Naive thymus-derived CD4-positive, alpha-beta T cell (primary cell): ENCODE measurements at regions of chr21 and their contacts with region 1.

Region 1: GRCh38 chr21:29343519-29343918 is 44.8 kb downstream of the BACH1 start:
- DNase-seq: no peak
- ATAC-seq: no peak
- H3K4me3 ChIP-seq: no peak overlapping the region
- H3K4me3 Mint-ChIP-seq: no peak overlapping the region
- H3K27ac ChIP-seq: no peak overlapping the region
- H3K27ac Mint-ChIP-seq: no peak overlapping the region
- H3K4me1 ChIP-seq: peaks cover 0 to 6% of the 10 kb centered on the region in 2 donors
- H3K4me1 Mint-ChIP-seq: peaks cover 4 to 31% (median 15%) of the 10 kb centered on the region in 7 donors
- H3K27me3 ChIP-seq: no peaks in the 10 kb centered on the region
- H3K27me3 Mint-ChIP-seq: no peaks in the 10 kb centered on the region

Region 2: GRCh38 chr21:29091032-29091431 is 252.5 kb before region 1 on chr21:
- CTCF ChIA-PET with region 1: interaction called, 19 read pairs
- POLR2A ChIA-PET with region 1: interaction called, 4 read pairs
- intact Hi-C with region 1: loop called (anchors 1 kb)
- DNase-seq: no peak
- ATAC-seq: peak; percentile 9
- H3K4me3 ChIP-seq: no peak overlapping the region
- H3K4me3 Mint-ChIP-seq: no peak overlapping the region
- H3K27ac ChIP-seq: no peak overlapping the region
- H3K27ac Mint-ChIP-seq: no peak overlapping the region
- H3K4me1 ChIP-seq: no peaks in the 10 kb centered on the region
- H3K4me1 Mint-ChIP-seq: peaks cover 0 to 9% (median 0%) of the 10 kb centered on the region in 7 donors
- H3K27me3 ChIP-seq: no peaks in the 10 kb centered on the region
- H3K27me3 Mint-ChIP-seq: peaks cover 0 to 3% (median 0%) of the 10 kb centered on the region in 5 donors

Region 3: DNA sequence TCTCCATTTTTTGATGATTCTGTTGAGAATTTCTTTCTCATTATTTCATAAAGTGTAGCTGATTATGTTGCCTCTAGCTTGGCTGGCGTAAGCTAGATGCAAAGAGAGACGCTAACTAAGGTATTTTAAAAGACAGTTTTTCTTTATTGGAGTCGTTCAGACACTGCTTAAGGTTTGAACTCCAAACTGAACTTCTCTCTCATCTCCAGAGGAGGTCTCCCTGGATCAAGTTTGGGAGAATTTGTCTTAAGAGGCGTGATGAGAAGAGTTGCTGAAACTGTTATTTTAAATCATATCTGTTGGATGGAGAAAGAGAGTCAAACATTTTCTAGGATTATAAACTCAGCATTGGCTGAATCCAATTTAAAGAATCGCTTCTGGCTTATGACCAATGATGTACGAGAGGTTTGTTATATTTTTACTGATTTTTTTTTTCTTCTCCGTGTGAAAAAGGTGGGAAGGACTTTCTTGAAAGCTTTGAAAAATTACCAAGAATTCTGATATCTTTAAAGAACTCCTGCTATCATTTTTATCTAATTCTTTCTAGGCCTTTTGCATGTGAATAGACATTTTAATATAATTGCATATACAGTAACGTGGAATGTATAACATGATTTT is 179.1 kb before region 1 on chr21:
- CTCF ChIA-PET with region 1: no interaction called
- POLR2A ChIA-PET with region 1: interaction called, 3 read pairs
- intact Hi-C with region 1: loop called (anchors 1 kb)
- DNase-seq: peak in 1 of 9 donors; percentile 6
- ATAC-seq: no peak
- H3K4me3 ChIP-seq: no peak overlapping the region
- H3K4me3 Mint-ChIP-seq: no peak overlapping the region
- H3K27ac ChIP-seq: no peak overlapping the region
- H3K27ac Mint-ChIP-seq: no peak overlapping the region
- H3K4me1 ChIP-seq: no peaks in the 10 kb centered on the region
- H3K4me1 Mint-ChIP-seq: peaks cover 0 to 15% (median 0%) of the 10 kb centered on the region in 7 donors
- H3K27me3 ChIP-seq: no peaks in the 10 kb centered on the region
- H3K27me3 Mint-ChIP-seq: peaks cover 0 to 3% (median 0%) of the 10 kb centered on the region in 5 donors

Region 4: DNA sequence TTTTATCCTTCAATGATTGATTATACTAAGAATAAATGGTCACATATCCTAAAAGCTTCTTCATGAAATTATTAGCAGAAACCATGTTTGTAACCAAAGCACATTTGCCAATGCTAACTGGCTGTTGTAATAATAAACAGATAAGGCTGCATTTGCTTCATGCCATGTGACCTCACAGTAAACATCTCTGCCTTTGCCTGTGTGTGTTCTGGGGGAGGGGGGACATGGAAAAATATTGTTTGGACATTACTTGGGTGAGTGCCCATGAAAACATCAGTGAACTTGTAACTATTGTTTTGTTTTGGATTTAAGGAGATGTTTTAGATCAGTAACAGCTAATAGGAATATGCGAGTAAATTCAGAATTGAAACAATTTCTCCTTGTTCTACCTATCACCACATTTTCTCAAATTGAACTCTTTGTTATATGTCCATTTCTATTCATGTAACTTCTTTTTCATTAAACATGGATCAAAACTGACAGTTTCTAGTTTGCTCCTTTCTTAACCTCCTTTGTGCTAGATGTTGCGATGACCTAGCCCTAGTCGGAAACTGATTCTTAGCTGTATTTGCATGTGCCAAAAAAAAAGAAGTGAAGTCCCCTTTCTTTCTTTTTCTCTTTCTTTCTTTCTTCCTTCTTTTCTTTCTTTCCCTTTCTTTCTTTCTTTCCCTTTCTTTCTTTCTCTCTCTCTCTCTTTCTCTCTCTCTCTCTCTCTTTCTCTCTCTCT is 167.9 kb before region 1 on chr21:
- CTCF ChIA-PET with region 1: no interaction called
- POLR2A ChIA-PET with region 1: no interaction called
- intact Hi-C with region 1: no loop called
- DNase-seq: no peak
- ATAC-seq: no peak
- H3K4me3 ChIP-seq: no peak overlapping the region
- H3K4me3 Mint-ChIP-seq: no peak overlapping the region
- H3K27ac ChIP-seq: no peak overlapping the region
- H3K27ac Mint-ChIP-seq: peak overlapping the region in 1 of 9 donors; percentile 12
- H3K4me1 ChIP-seq: no peaks in the 10 kb centered on the region
- H3K4me1 Mint-ChIP-seq: peaks cover 0 to 20% (median 5%) of the 10 kb centered on the region in 7 donors
- H3K27me3 ChIP-seq: no peaks in the 10 kb centered on the region
- H3K27me3 Mint-ChIP-seq: no peaks in the 10 kb centered on the region

Region 5: GRCh38 chr21:29217818-29218291 is 125.7 kb before region 1 on chr21:
- CTCF ChIA-PET with region 1: no interaction called
- POLR2A ChIA-PET with region 1: no interaction called
- intact Hi-C with region 1: no loop called
- DNase-seq: no peak
- ATAC-seq: peak; percentile 81
- H3K4me3 ChIP-seq: no peak overlapping the region
- H3K4me3 Mint-ChIP-seq: no peak overlapping the region
- H3K27ac ChIP-seq: no peak overlapping the region
- H3K27ac Mint-ChIP-seq: no peak overlapping the region
- H3K4me1 ChIP-seq: no peaks in the 10 kb centered on the region
- H3K4me1 Mint-ChIP-seq: peaks cover 0 to 5% (median 0%) of the 10 kb centered on the region in 7 donors
- H3K27me3 ChIP-seq: no peaks in the 10 kb centered on the region
- H3K27me3 Mint-ChIP-seq: peaks cover 0 to 4% (median 0%) of the 10 kb centered on the region in 5 donors

Region 6: GRCh38 chr21:29232601-29233546 is 110.6 kb before region 1 on chr21:
- CTCF ChIA-PET with region 1: interaction called, 5 read pairs
- POLR2A ChIA-PET with region 1: no interaction called
- intact Hi-C with region 1: loop called in 1 of 2 experiments (anchors 1 kb)
- DNase-seq: peak in 2 of 9 donors; percentile 3 to 8
- ATAC-seq: peak; percentile 24
- H3K4me3 ChIP-seq: no peak overlapping the region
- H3K4me3 Mint-ChIP-seq: peak overlapping the region in 1 of 10 donors; percentile 40
- H3K27ac ChIP-seq: no peak overlapping the region
- H3K27ac Mint-ChIP-seq: peak overlapping the region in 1 of 9 donors; percentile 45
- H3K4me1 ChIP-seq: no peaks in the 10 kb centered on the region
- H3K4me1 Mint-ChIP-seq: peaks cover 5 to 40% (median 6%) of the 10 kb centered on the region in 7 donors
- H3K27me3 ChIP-seq: no peaks in the 10 kb centered on the region
- H3K27me3 Mint-ChIP-seq: peaks cover 0 to 14% (median 0%) of the 10 kb centered on the region in 5 donors

Region 7: GRCh38 chr21:29267666-29268065 is 75.9 kb before region 1 on chr21:
- CTCF ChIA-PET with region 1: interaction called, 3 read pairs
- POLR2A ChIA-PET with region 1: no interaction called
- intact Hi-C with region 1: loop called in 1 of 2 experiments (anchors 1 kb)
- DNase-seq: no peak
- ATAC-seq: no peak
- H3K4me3 ChIP-seq: no peak overlapping the region
- H3K4me3 Mint-ChIP-seq: no peak overlapping the region
- H3K27ac ChIP-seq: no peak overlapping the region
- H3K27ac Mint-ChIP-seq: no peak overlapping the region
- H3K4me1 ChIP-seq: no peaks in the 10 kb centered on the region
- H3K4me1 Mint-ChIP-seq: peaks cover 0 to 5% (median 0%) of the 10 kb centered on the region in 7 donors
- H3K27me3 ChIP-seq: no peaks in the 10 kb centered on the region
- H3K27me3 Mint-ChIP-seq: peaks cover 0 to 3% (median 0%) of the 10 kb centered on the region in 5 donors